ENCODE measurements at regions of chr1 and their contacts with region 1.

Region 1: GRCh38 chr1:157090196-157090647 is 9.4 kb downstream of the ETV3L start:
- DNase-seq: peak; percentile 78
- H3K4me3 ChIP-seq: no peak overlapping the region
- H3K27ac ChIP-seq: no peak overlapping the region
- H3K4me1 ChIP-seq: no peaks in the 10 kb centered on the region
- CTCF ChIP-seq: peak; percentile 98

Region 2: DNA sequence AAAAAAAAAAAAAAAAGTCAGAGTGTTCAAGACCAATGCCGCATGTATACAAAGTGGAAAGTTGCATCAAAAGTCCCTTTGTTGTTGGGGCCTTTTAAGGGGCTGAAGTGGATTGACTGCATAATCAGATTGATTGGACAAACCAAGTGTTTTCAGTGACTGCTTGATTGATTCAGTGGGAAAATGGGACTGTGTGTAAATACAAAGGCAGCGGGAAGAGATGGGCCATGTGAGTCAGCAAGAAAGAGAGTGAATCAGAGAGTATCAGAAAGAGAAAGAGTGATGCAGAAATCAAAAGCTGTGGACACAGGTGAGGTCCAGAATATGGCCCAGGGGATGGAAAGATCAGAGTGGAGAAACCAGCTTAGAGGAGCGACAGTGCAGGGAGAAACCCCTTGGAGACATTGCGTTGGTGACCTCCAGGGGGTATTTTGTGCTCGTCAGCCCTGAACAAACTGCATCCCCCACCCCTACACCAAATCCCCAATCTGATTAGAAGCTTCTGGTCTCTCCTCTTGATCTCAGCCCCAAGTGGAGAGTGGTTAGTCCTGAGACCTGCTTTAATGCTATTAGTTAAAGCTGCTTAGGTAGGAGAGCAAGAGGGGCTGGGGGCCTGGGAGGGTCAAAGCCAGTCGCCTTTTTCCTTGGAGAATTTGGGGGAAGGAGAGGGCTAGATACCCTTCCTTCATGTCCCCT is 14.5 kb after region 1 on chr1:
- CTCF ChIA-PET with region 1: no interaction called
- POLR2A ChIA-PET with region 1: no interaction called
- intact Hi-C with region 1: no loop called
- DNase-seq: no peak
- H3K4me3 ChIP-seq: no peak overlapping the region
- H3K27ac ChIP-seq: no peak overlapping the region
- H3K4me1 ChIP-seq: no peaks in the 10 kb centered on the region
- CTCF ChIP-seq: no peak

Region 3: GRCh38 chr1:157156058-157156541 is 65.9 kb after region 1 on chr1:
- CTCF ChIA-PET with region 1: interaction called, 5 read pairs
- POLR2A ChIA-PET with region 1: no interaction called
- intact Hi-C with region 1: loop called (anchors 1 kb)
- DNase-seq: peak; percentile 76
- H3K4me3 ChIP-seq: no peak overlapping the region
- H3K27ac ChIP-seq: no peak overlapping the region
- H3K4me1 ChIP-seq: no peaks in the 10 kb centered on the region
- CTCF ChIP-seq: peak; percentile 91

Region 4: DNA sequence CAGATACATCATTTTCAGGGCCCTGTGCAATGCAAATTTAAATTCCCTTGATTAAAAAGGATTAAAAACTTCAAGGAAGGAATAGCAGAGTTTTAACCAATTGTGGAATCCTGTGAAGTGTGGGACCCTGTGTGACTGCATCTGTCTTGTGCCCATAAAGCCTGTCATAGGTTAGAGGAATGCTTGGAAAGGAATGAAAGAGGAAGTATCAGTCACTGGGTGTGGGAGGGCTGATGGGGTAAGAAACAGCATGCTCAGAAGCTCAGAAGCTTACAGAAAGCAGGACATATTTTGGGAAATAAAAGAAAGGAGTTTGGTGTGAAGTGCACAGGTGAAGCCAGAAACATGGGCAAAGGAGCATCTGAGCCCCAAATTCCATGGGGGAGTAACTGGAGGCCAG is 198.8 kb after region 1 on chr1:
- CTCF ChIA-PET with region 1: no interaction called
- POLR2A ChIA-PET with region 1: no interaction called
- intact Hi-C with region 1: no loop called
- DNase-seq: no peak
- H3K4me3 ChIP-seq: no peak overlapping the region
- H3K27ac ChIP-seq: no peak overlapping the region
- H3K4me1 ChIP-seq: no peaks in the 10 kb centered on the region
- CTCF ChIP-seq: no peak

Measured in OCI-LY7 (cell line).